WTC11 (cell line): ENCODE measurements at regions of chr5 and their contacts with region 1.

Region 1: GRCh38 chr5:134041570-134042411 is 37.0 kb upstream of the VDAC1 start:
- DNase-seq: no peak
- ATAC-seq: no peak
- H3K4me3 Mint-ChIP-seq: no peak overlapping the region
- H3K27ac Mint-ChIP-seq: no peak overlapping the region
- H3K4me1 Mint-ChIP-seq: peaks cover 6% of the 10 kb centered on the region
- H3K27me3 Mint-ChIP-seq: peaks cover 23% of the 10 kb centered on the region
- CTCF ChIP-seq: no peak

Region 2: GRCh38 chr5:133996683-133997252 is 45.0 kb before region 1 on chr5:
- CTCF ChIA-PET with region 1: interaction called, 29 read pairs
- POLR2A ChIA-PET with region 1: no interaction called
- DNase-seq: peak; percentile 57
- ATAC-seq: peak; percentile 84
- H3K4me3 Mint-ChIP-seq: no peak overlapping the region
- H3K27ac Mint-ChIP-seq: peak overlapping the region; percentile 15; the same call in 1 of the 2 replicates
- H3K4me1 Mint-ChIP-seq: peaks cover 54% of the 10 kb centered on the region
- H3K27me3 Mint-ChIP-seq: no peaks in the 10 kb centered on the region
- CTCF ChIP-seq: peak; percentile 43; the same call in 1 of the 2 replicates

Region 3: GRCh38 chr5:134026521-134027268 is 15.1 kb before region 1 on chr5:
- CTCF ChIA-PET with region 1: interaction called, 76 read pairs
- POLR2A ChIA-PET with region 1: no interaction called
- DNase-seq: peak; percentile 74
- ATAC-seq: peak; percentile 99
- H3K4me3 Mint-ChIP-seq: no peak overlapping the region
- H3K27ac Mint-ChIP-seq: no peak overlapping the region; the same call in 1 of the 2 replicates
- H3K4me1 Mint-ChIP-seq: 0 out of 2 replicates have a peak, but pooled peaks cover 9% of the 10 kb centered on the region
- H3K27me3 Mint-ChIP-seq: peaks cover 4% of the 10 kb centered on the region; the same call in 1 of the 2 replicates
- CTCF ChIP-seq: peak; percentile 41; the same call in 1 of the 2 replicates

Region 4: GRCh38 chr5:134070725-134071613 is 29.2 kb after region 1 on chr5:
- CTCF ChIA-PET with region 1: interaction called, 23 read pairs
- POLR2A ChIA-PET with region 1: interaction called, 7 read pairs
- DNase-seq: peak; percentile 69
- ATAC-seq: peak; percentile 80
- H3K4me3 Mint-ChIP-seq: peak overlapping the region; percentile 68
- H3K27ac Mint-ChIP-seq: no peak overlapping the region
- H3K4me1 Mint-ChIP-seq: peaks cover 9% of the 10 kb centered on the region
- H3K27me3 Mint-ChIP-seq: peaks cover 20% of the 10 kb centered on the region
- CTCF ChIP-seq: no peak

Region 5: GRCh38 chr5:134106991-134107701 is 65.4 kb after region 1 on chr5:
- CTCF ChIA-PET with region 1: interaction called, 21 read pairs
- POLR2A ChIA-PET with region 1: no interaction called
- DNase-seq: no peak
- ATAC-seq: no peak
- H3K4me3 Mint-ChIP-seq: no peak overlapping the region
- H3K27ac Mint-ChIP-seq: no peak overlapping the region
- H3K4me1 Mint-ChIP-seq: peaks cover 13% of the 10 kb centered on the region
- H3K27me3 Mint-ChIP-seq: peaks cover 24% of the 10 kb centered on the region
- CTCF ChIP-seq: no peak

Region 6: DNA sequence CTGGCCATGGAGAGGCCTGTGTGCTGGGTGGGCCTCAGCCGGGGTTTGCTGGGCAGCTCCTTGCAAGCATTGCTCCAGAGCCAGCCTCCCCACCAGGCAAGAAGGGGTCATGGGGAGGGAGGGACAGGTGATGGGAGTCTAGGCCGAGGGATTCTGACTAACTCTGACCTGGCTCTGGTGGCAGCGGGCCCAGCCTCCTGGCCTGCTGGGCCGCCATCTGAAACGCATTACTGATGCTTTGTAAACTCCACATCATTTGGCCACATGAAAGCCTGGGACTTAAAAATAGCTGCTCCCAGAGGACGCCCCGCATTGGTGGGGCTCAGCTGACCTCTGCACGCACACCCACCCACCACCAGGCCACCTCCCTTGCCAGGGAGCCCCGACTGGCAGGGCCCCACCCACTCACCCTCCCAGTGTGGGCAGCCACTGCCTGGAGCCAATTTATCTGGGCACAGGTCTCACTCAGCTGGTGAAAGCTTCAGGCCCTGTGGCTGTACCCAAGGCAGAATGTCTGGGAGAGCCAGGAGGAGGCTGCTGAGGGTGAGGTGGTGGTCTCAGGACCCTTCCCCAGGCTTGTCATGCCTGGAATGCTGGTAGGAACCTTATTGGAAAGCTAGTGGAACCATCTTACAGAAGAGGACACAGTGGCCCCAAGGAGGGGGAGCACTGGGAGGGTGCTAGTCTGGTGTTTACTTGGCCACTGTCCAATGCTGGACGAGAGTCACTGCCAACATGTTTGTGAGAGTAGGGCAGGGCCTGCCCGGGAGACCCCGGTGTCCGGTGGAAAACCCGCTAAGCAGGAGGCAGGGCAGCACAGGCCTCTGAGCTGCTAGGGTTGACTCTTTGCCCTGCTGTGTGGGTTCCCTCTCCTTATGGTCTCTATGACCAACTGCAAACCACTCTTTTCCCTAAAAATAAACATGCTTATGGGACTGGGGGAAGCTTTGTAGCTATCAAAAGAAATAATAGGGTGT is 83.5 kb after region 1 on chr5:
- CTCF ChIA-PET with region 1: interaction called, 12 read pairs
- POLR2A ChIA-PET with region 1: no interaction called
- DNase-seq: no peak
- ATAC-seq: no peak
- H3K4me3 Mint-ChIP-seq: no peak overlapping the region
- H3K27ac Mint-ChIP-seq: no peak overlapping the region
- H3K4me1 Mint-ChIP-seq: no peaks in the 10 kb centered on the region
- H3K27me3 Mint-ChIP-seq: no peaks in the 10 kb centered on the region
- CTCF ChIP-seq: no peak

Region 7: GRCh38 chr5:134225618-134226440 is 184.0 kb after region 1 on chr5 and contains the start of gene PPP2CA:
- CTCF ChIA-PET with region 1: interaction called, 12 read pairs
- POLR2A ChIA-PET with region 1: no interaction called
- DNase-seq: peak; percentile 99
- ATAC-seq: peak; percentile 85
- H3K4me3 Mint-ChIP-seq: peak within 1 kb of the TSS; percentile 87
- H3K27ac Mint-ChIP-seq: peak within 1 kb of the TSS; percentile 98
- H3K4me1 Mint-ChIP-seq: peaks cover 43% of the 10 kb centered on the region
- H3K27me3 Mint-ChIP-seq: no peaks in the 10 kb centered on the region
- CTCF ChIP-seq: no peak
- total RNA-seq, gene PPP2CA: 178 to 186 TPM (median 178 TPM) in 3 replicates